ENCODE measurements at regions of chr1 and their contacts with region 1.

Region 1: DNA sequence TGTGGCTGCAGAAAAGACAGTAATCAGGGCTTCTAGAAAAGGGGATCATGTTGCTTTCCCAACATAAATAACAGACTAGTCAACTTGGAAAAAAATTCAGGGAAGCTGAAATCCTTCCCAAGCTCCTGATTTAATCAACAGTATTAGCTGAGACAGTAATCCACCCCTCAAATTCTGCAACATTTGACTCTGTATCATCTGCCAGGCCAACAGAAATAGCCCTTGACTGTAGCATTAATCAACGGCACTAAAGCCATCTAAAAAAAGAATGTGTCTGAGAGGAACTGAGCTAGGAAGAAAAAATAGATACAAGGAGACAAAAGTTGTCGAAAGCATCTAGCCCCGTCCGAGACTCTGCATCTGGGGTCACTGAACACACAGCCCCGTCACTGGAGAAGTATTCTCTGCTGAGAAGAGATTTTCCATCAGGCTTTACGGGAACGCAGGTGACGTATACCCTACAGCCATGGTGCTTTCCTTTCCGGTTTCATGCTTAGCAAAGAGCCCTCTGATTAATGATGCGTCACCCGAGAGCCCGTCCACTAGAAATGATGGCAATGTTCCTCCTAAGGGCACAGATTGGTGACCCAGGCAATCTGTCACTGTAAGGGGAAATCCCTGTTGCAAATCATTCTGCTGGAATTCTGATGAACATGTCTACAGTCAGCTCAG is 42.1 kb upstream of the TP53BP2 start:
- DNase-seq: peak; percentile 99
- ATAC-seq: peak; percentile 96
- H3K4me3 ChIP-seq: peak overlapping the region; percentile 20; the same call in 1 of the 2 replicates
- H3K27ac ChIP-seq: peak overlapping the region; percentile 15
- H3K4me1 ChIP-seq: peaks cover 4% of the 10 kb centered on the region
- H3K27me3 ChIP-seq: no peaks in the 10 kb centered on the region
- CTCF ChIP-seq: no peak
- POLR2A ChIP-seq: peak; percentile 28; the same call in 1 of the 2 replicates
- RAD21 ChIP-seq: no peak

Region 2: GRCh38 chr1:223845810-223846682 is 41.8 kb before region 1 on chr1 and contains the start of gene TP53BP2:
- CTCF ChIA-PET with region 1: no interaction called
- POLR2A ChIA-PET with region 1: no interaction called
- dilution Hi-C with region 1: no loop called
- in situ Hi-C with region 1: no loop called
- intact Hi-C with region 1: loop called (anchors 5 kb)
- DNase-seq: peak; percentile 87
- ATAC-seq: peak; percentile 95
- H3K4me3 ChIP-seq: peak within 1 kb of the TSS; percentile 93
- H3K27ac ChIP-seq: peak within 1 kb of the TSS; percentile 98
- H3K4me1 ChIP-seq: peaks cover 3% of the 10 kb centered on the region
- H3K27me3 ChIP-seq: no peaks in the 10 kb centered on the region
- CTCF ChIP-seq: peak; percentile 76
- POLR2A ChIP-seq: peak; percentile 86
- RAD21 ChIP-seq: peak; percentile 64
- total RNA-seq, gene TP53BP2: 35.0 and 35.8 TPM in 2 replicates

Measured in IMR-90 (cell line).